Kidney (tissue), 22 donors: ENCODE measurements at regions of chr4 and their contacts with region 1.

Region 1: DNA sequence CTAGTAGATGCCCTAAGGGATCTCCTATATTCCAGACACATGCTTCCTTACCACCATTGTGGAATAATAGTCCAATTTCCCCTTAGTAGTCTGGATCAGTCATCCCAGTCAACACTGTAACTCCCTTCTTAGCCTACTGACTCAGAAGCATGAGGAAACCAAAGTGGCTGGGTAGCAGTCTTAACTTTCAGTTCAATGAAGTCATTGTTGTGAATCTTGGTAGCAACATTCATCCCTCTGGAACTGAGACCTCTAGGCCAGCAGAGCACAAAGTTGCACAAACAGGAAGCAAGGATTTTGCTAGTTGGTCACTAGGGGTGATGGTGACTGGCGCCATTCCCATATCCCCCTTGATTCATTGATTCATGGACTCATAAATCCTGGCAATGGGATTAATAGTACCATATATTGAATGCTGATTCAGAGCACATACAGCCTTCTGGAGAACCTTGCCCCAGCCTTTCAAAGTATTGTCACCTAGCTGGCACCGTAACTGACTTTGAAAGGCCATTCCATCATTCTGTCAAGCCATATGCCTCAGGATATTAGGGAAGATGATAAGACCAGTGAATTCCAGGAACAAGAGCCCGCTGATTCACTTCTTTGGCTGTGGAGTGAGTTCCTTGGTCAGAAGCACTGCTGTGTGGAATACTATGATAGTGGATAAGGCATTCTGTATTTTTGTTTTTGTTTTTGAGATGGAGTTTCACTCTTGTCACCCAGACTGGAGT is 19.7 kb upstream of the GPAT3 start:
- DNase-seq: no peak
- H3K4me3 ChIP-seq: no peak overlapping the region
- H3K27ac ChIP-seq: no peak overlapping the region
- H3K4me1 ChIP-seq: no peaks in the 10 kb centered on the region
- H3K27me3 ChIP-seq: no peaks in the 10 kb centered on the region
- CTCF ChIP-seq: no peak

Region 2: DNA sequence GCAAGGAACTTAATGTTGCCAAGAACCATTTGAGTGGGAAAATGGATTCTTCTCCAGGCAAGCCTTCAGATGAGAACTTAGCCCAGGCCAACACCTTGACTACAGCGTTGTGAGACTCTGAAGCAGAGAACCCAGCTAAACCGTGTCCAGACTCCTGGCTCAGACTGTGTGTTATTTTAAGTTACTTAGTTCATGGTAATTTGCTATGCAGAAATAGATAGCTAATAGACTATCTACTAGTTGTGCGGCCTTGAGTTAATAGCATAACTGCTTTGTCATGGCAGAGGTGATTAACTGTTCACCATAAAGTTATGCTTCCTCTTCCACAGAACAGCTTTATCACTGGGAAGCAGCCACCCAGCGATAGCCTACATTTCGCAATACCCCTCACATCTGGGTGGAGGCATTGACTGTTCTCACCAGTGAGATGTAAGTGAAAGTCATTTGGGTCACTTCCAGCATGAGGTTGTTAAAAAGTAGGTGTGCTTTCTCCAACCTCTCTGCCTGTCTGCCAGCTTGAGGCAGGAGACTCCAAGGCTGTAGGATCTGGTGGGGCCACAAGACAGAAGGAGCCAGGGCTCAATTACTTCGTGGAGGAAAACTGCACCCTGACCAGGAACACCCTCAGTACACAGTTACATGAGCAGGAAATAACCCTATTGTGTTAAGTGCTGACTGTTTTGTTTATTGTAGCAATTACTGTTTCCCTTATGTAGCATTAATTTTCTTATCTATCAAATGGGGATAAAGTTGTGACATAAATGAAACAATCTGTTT is 113.9 kb after region 1 on chr4:
- intact Hi-C with region 1: loop called (anchors 10 kb)
- DNase-seq: peak in 1 of 5 donors; percentile 29
- H3K4me3 ChIP-seq: no peak overlapping the region
- H3K27ac ChIP-seq: no peak overlapping the region
- H3K4me1 ChIP-seq: peaks cover 2 to 30% (median 12%) of the 10 kb centered on the region in 3 donors
- H3K27me3 ChIP-seq: no peaks in the 10 kb centered on the region
- CTCF ChIP-seq: no peak

Region 3: DNA sequence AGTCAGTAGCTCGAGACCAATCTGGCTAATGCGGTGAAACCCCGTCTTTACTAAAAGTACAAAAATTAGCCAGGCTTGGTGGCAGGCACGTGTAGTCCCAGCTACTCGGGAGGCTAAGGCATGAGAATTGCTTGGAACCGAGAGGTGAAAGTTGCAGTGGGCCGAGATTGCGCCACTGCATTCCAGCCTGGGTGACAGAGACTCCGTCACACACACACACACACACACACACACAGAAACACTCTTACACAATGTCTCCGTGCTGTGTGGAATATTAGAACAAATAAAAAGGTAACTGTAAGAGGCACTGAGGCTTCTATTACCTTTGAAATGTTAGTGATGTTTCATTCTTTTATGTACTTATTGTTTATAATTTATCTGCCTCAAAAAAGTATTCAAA is 346.3 kb after region 1 on chr4:
- intact Hi-C with region 1: no loop called
- DNase-seq: no peak
- H3K4me3 ChIP-seq: no peak overlapping the region
- H3K27ac ChIP-seq: no peak overlapping the region
- H3K4me1 ChIP-seq: no peaks in the 10 kb centered on the region
- H3K27me3 ChIP-seq: no peaks in the 10 kb centered on the region
- CTCF ChIP-seq: no peak